ENCODE measurements at regions of chr19 and their contacts with region 1.

Region 1: GRCh38 chr19:46878613-46879375 is 18.0 kb downstream of the ARHGAP35 start:
- DNase-seq: no peak
- H3K27ac ChIP-seq: no peak overlapping the region; the same call in 1 of the 2 replicates
- CTCF ChIP-seq: no peak

Region 2: GRCh38 chr19:46746281-46747013 is 132.3 kb before region 1 on chr19 and contains the start of gene STRN4:
- CTCF ChIA-PET with region 1: interaction called, 10 read pairs
- POLR2A ChIA-PET with region 1: no interaction called
- DNase-seq: peak; percentile 90
- H3K27ac ChIP-seq: peak within 1 kb of the TSS; percentile 84
- CTCF ChIP-seq: no peak

Region 3: GRCh38 chr19:46850228-46851203 is 28.3 kb before region 1 on chr19 and contains the start of gene AP2S1:
- CTCF ChIA-PET with region 1: no interaction called
- POLR2A ChIA-PET with region 1: no interaction called
- DNase-seq: peak; percentile 94
- H3K27ac ChIP-seq: peak within 1 kb of the TSS; percentile 94
- CTCF ChIP-seq: no peak

Region 4: GRCh38 chr19:47013041-47013517 is 134.3 kb after region 1 on chr19:
- CTCF ChIA-PET with region 1: no interaction called
- POLR2A ChIA-PET with region 1: no interaction called
- DNase-seq: peak; percentile 84
- H3K27ac ChIP-seq: peak overlapping the region; percentile 52
- CTCF ChIP-seq: peak; percentile 97

Region 5: DNA sequence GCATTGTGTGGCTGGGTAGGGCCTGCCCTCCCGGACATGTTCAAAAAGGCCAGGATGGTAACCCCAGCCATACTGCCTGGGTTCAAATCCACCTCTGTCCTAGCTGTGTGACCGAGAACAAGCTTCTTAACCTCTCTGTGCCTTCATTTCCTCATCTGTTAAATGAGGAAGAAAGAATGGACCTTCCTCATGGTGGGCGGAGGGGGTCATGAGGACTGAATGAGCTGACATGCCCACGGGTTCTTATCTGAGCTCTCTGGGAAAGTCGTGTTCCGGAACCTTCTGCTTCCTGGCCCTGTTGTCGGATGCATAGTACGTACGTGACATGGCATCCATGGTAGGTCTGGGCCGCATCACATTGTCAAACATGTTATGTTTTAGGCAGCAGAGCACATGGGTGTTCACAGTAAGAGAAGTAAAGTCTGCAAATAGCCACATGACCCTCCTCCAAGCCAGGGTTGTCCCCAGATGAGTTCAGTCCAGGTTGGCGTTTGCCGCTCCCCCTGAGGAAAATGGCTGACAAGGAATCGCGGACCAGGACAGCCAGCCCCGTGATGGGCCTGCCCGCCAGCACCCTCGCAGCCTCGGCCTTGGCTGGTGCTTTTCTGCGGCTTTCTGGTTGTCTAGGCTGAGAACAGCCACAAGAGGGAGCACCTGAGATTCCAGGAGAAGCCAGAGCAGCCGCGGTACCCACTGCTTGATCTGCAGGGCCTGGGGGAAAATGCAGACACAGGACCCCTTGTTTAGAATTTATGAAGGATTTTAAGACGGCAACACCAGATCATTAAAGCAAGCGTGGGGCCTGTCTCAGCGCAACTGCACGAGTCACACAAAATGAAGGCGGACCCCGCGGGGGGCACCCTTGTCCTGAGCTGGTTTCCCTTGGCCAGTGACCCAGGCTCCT is 1796.4 kb after region 1 on chr19:
- CTCF ChIA-PET with region 1: no interaction called
- POLR2A ChIA-PET with region 1: interaction called, 10 read pairs
- DNase-seq: peak; percentile 85
- H3K27ac ChIP-seq: no peak overlapping the region
- CTCF ChIP-seq: peak; percentile 91

Measured in RWPE1 (cell line).